Activated CD8-positive, alpha-beta T cell treated with anti-CD3 and anti-CD28 coated beads for 36 hours (primary cell): ENCODE measurements at regions of chr1 and their contacts with region 1.

Region 1: GRCh38 chr1:156245451-156246232 is 2.2 kb downstream of the PAQR6 start:
- DNase-seq: peak; percentile 64
- ATAC-seq: peak; percentile 60
- H3K4me3 Mint-ChIP-seq: peak overlapping the region; percentile 70
- H3K27ac Mint-ChIP-seq: peak overlapping the region; percentile 73
- H3K4me1 Mint-ChIP-seq: peaks cover 17% of the 10 kb centered on the region
- H3K27me3 Mint-ChIP-seq: no peaks in the 10 kb centered on the region
- CTCF ChIP-seq: no peak

Region 2: DNA sequence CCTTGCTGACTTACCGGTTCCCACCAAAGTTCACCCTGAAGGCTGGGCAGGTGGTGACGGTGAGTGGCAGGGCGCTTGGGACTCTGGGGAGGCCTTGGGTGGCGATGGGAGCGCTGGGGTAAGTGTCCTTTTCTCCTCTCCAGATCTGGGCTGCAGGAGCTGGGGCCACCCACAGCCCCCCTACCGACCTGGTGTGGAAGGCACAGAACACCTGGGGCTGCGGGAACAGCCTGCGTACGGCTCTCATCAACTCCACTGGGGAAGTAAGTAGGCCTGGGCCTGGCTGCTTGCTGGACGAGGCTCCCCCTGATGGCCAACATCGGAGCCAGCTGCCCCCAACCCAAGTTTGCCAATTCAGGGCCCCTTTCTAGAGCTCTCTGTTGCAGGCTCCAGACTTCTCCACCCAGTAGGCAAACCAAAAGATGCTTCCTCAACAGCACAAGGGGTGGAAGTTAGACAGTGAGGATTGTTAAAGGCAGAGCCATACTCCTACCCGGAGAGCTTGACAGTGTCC is 108.6 kb before region 1 on chr1:
- CTCF ChIA-PET with region 1: interaction called, 10 read pairs
- POLR2A ChIA-PET with region 1: interaction called, 4 read pairs
- intact Hi-C with region 1: no loop called
- DNase-seq: no peak
- ATAC-seq: no peak
- H3K4me3 Mint-ChIP-seq: no peak overlapping the region
- H3K27ac Mint-ChIP-seq: no peak overlapping the region
- H3K4me1 Mint-ChIP-seq: no peaks in the 10 kb centered on the region
- H3K27me3 Mint-ChIP-seq: no peaks in the 10 kb centered on the region
- CTCF ChIP-seq: no peak

Region 3: GRCh38 chr1:156193488-156194299 is 51.9 kb before region 1 on chr1 and contains the start of gene SLC25A44:
- CTCF ChIA-PET with region 1: no interaction called
- POLR2A ChIA-PET with region 1: no interaction called
- intact Hi-C with region 1: no loop called
- DNase-seq: peak; percentile 98
- ATAC-seq: peak; percentile 95
- H3K4me3 Mint-ChIP-seq: no peak within 1 kb of the TSS
- H3K27ac Mint-ChIP-seq: peak within 1 kb of the TSS; percentile 97
- H3K4me1 Mint-ChIP-seq: peaks cover 57% of the 10 kb centered on the region
- H3K27me3 Mint-ChIP-seq: no peaks in the 10 kb centered on the region
- CTCF ChIP-seq: no peak
- total RNA-seq, gene SLC25A44: 41.9 to 43.0 TPM

Region 4: DNA sequence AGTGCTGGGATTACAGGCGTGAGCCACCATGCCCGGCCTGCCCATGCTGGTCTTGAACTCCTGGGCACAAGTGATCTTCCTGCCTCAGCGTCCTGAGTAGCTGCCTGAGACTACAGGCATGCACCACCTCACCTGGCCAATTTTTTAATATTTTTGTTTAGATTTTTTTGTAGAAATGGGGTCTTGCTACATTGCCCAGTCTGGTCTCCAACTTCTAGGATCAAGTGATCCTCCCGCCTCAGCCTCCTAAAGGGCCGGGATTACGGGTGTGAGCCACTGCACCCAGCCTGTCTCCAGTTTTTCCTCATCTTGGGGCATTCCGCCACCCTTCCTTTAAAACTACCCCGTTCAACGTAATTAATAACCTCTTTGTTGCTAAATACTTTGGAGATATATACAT is 25.4 kb before region 1 on chr1:
- CTCF ChIA-PET with region 1: no interaction called
- POLR2A ChIA-PET with region 1: no interaction called
- intact Hi-C with region 1: no loop called
- DNase-seq: no peak
- ATAC-seq: no peak
- H3K4me3 Mint-ChIP-seq: no peak overlapping the region
- H3K27ac Mint-ChIP-seq: peak overlapping the region; percentile 99
- H3K4me1 Mint-ChIP-seq: peaks cover 67% of the 10 kb centered on the region
- H3K27me3 Mint-ChIP-seq: no peaks in the 10 kb centered on the region
- CTCF ChIP-seq: no peak